B cell (primary cell): ENCODE measurements at regions of chr4 and their contacts with region 1.

Region 1: DNA sequence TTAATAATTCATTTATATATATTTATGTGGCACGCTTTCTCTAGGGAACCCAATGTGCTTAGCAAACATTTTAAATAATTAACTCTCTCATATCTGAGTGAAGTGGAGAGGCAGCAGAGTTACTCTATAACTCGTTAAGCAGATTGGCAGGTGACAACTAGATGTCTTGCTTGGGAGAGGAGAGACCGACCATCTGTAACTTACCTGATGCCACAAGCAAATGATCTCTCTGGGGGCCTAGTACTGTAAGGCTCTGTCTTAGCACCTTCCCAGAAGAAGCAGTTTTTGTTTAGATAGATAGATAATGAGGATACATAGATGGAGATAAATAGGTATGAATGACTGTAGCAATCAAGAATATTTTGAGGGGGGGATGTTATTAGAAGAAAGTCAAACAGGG is 11.9 kb upstream of the SEL1L3 start:
- DNase-seq: peak; percentile 68
- ATAC-seq: peak; percentile 32
- H3K4me3 ChIP-seq: no peak overlapping the region
- H3K4me3 Mint-ChIP-seq: peak overlapping the region; percentile 13
- H3K27ac ChIP-seq: peak overlapping the region; percentile 93 to 94
- H3K27ac Mint-ChIP-seq: peak overlapping the region; percentile 89
- H3K4me1 ChIP-seq: peaks cover 97 to 99% of the 10 kb centered on the region in 2 donors
- H3K4me1 Mint-ChIP-seq: peaks cover 90% of the 10 kb centered on the region
- H3K27me3 ChIP-seq: no peaks in the 10 kb centered on the region
- H3K27me3 Mint-ChIP-seq: no peaks in the 10 kb centered on the region
- CTCF ChIP-seq: no peak

Region 2: DNA sequence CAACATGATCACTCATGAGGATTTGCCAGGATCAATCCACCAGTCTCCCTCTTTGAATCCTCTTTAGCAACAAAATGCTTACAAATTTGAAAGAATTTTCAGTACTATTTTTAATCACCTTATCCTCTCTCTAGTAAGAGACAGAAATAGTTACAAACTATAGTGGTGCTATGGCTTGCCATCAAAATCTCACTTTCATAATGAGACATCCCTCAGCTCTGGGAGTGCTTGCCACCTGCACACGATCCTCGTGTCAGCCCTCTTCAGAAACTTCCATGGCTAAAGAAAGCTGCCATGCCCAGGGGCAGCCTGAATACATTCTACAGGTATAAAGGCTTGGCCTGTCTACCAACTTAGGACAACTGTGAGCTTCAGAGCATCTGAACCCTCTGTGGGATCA is 1285.2 kb before region 1 on chr4:
- CTCF ChIA-PET with region 1: no interaction called
- POLR2A ChIA-PET with region 1: no interaction called
- intact Hi-C with region 1: loop called (anchors 5 kb)
- DNase-seq: no peak
- ATAC-seq: no peak
- H3K4me3 ChIP-seq: no peak overlapping the region
- H3K4me3 Mint-ChIP-seq: no peak overlapping the region
- H3K27ac ChIP-seq: no peak overlapping the region
- H3K27ac Mint-ChIP-seq: no peak overlapping the region
- H3K4me1 ChIP-seq: peaks cover 0 to 7% of the 10 kb centered on the region in 2 donors
- H3K4me1 Mint-ChIP-seq: peaks cover 5% of the 10 kb centered on the region
- H3K27me3 ChIP-seq: peaks cover 0 to 8% (median 3%) of the 10 kb centered on the region in 4 experiments
- H3K27me3 Mint-ChIP-seq: peaks cover 21% of the 10 kb centered on the region
- CTCF ChIP-seq: no peak